ENCODE measurements at regions of chr11 and their contacts with region 1.

Region 1: GRCh38 chr11:61446211-61446651 is 16.3 kb downstream of the SDHAF2 start:
- DNase-seq: peak; percentile 87
- H3K4me3 Mint-ChIP-seq: no peak overlapping the region
- H3K27ac Mint-ChIP-seq: no peak overlapping the region
- H3K4me1 Mint-ChIP-seq: peaks cover 20% of the 10 kb centered on the region
- H3K27me3 Mint-ChIP-seq: no peaks in the 10 kb centered on the region

Region 2: DNA sequence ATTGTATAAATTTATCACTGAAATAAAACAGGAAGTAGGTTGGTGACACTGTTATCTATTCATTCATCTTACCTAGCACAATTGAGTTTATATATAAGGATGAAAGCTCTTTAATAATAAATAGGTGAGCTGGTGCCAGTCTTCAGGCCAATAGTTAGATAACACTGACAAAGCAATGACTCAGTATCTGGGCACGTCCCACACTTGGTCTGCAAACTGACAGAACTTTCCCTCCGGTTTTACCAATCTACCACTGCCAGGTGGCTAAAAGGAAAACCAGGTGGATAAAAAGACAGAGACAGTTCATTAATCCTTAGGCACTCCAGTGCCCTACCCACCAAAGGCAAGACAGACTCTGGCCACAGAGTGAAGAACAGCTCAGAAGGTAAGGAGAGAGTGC is 131.0 kb before region 1 on chr11:
- CTCF ChIA-PET with region 1: no interaction called
- POLR2A ChIA-PET with region 1: no interaction called
- DNase-seq: no peak
- H3K4me3 Mint-ChIP-seq: no peak overlapping the region
- H3K27ac Mint-ChIP-seq: no peak overlapping the region
- H3K4me1 Mint-ChIP-seq: no peaks in the 10 kb centered on the region
- H3K27me3 Mint-ChIP-seq: no peaks in the 10 kb centered on the region

Region 3: GRCh38 chr11:61403658-61404057 is 42.6 kb before region 1 on chr11:
- CTCF ChIA-PET with region 1: no interaction called
- POLR2A ChIA-PET with region 1: no interaction called
- DNase-seq: no peak
- H3K4me3 Mint-ChIP-seq: no peak overlapping the region
- H3K27ac Mint-ChIP-seq: no peak overlapping the region
- H3K4me1 Mint-ChIP-seq: no peaks in the 10 kb centered on the region
- H3K27me3 Mint-ChIP-seq: no peaks in the 10 kb centered on the region

Region 4: DNA sequence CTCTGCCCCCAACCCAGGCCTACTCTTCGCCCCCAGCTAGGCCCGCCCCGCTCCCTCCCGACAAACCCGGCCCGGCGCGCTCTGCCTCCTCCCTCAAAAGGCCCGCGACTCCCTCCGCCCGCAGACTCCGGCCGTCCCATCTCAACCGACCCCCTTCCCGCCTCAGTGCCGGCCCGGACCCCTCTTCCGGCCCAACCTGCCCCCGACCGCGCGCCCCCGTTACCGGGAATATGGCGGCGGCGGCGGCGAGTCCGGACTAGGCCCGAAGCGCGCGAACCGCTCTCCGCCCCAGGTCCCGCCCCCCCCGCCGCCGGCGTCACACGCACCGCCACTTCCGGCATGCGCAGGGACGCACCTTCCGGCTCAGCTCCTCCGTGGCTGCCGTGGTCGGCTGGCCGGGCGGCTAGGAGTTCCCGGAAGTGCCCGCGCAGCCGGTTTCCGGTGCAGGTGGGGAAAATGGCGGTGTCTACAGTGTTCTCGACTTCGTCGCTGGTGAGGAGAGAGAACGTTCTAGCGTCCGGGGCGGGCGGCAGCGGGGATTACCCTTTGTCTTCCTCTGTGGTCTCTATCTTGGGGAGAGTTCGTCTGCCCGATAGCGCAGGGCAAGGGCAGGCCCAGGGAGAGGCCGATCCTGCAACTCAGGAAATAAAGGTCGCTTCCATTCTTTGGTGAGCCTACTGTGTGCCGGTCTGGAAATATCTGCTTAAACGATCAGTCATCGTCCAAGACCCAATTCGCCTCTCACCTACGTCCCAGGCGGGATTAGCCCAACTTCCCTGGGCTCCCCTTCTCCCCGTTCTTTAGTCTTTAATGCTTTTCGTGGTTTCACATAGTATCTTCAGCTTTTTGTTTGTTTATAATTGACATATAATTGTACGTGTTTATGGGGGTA is 16.3 kb before region 1 on chr11 and contains the starts of genes CPSF7 and SDHAF2:
- CTCF ChIA-PET with region 1: interaction called, 26 read pairs
- POLR2A ChIA-PET with region 1: no interaction called
- DNase-seq: peak; percentile 97
- H3K4me3 Mint-ChIP-seq: peak within 1 kb of the TSS; percentile 93
- H3K27ac Mint-ChIP-seq: peak within 1 kb of the TSS; percentile 98
- H3K4me1 Mint-ChIP-seq: peaks cover 59% of the 10 kb centered on the region
- H3K27me3 Mint-ChIP-seq: no peaks in the 10 kb centered on the region
- total RNA-seq, gene CPSF7: 106 to 133 TPM
- total RNA-seq, gene SDHAF2: 42.4 to 48.3 TPM

Region 5: GRCh38 chr11:61460474-61460881 is 14.2 kb after region 1 on chr11:
- CTCF ChIA-PET with region 1: interaction called, 23 read pairs
- POLR2A ChIA-PET with region 1: no interaction called
- DNase-seq: no peak
- H3K4me3 Mint-ChIP-seq: no peak overlapping the region
- H3K27ac Mint-ChIP-seq: no peak overlapping the region
- H3K4me1 Mint-ChIP-seq: no peaks in the 10 kb centered on the region
- H3K27me3 Mint-ChIP-seq: no peaks in the 10 kb centered on the region

Region 6: GRCh38 chr11:61509043-61510029 is 63.1 kb after region 1 on chr11:
- CTCF ChIA-PET with region 1: interaction called, 15 read pairs
- POLR2A ChIA-PET with region 1: no interaction called
- DNase-seq: peak; percentile 72
- H3K4me3 Mint-ChIP-seq: peak overlapping the region; percentile 30
- H3K27ac Mint-ChIP-seq: no peak overlapping the region
- H3K4me1 Mint-ChIP-seq: peaks cover 7% of the 10 kb centered on the region
- H3K27me3 Mint-ChIP-seq: peaks cover 34% of the 10 kb centered on the region

Region 7: GRCh38 chr11:61516675-61517572 is 70.7 kb after region 1 on chr11:
- CTCF ChIA-PET with region 1: interaction called, 19 read pairs
- POLR2A ChIA-PET with region 1: no interaction called
- DNase-seq: peak; percentile 42
- H3K4me3 Mint-ChIP-seq: no peak overlapping the region
- H3K27ac Mint-ChIP-seq: no peak overlapping the region
- H3K4me1 Mint-ChIP-seq: peaks cover 4% of the 10 kb centered on the region
- H3K27me3 Mint-ChIP-seq: peaks cover 2% of the 10 kb centered on the region

Measured in activated CD4-positive, alpha-beta T cell treated with anti-CD3 and anti-CD28 coated beads, Interleukin-2, amount 10 ng/mL, durations not matched to agents 7 days and 5 days (primary cell).